Dorsolateral prefrontal cortex (tissue), 120 donors: ENCODE measurements at regions of chr11 and their contacts with region 1.

Region 1: DNA sequence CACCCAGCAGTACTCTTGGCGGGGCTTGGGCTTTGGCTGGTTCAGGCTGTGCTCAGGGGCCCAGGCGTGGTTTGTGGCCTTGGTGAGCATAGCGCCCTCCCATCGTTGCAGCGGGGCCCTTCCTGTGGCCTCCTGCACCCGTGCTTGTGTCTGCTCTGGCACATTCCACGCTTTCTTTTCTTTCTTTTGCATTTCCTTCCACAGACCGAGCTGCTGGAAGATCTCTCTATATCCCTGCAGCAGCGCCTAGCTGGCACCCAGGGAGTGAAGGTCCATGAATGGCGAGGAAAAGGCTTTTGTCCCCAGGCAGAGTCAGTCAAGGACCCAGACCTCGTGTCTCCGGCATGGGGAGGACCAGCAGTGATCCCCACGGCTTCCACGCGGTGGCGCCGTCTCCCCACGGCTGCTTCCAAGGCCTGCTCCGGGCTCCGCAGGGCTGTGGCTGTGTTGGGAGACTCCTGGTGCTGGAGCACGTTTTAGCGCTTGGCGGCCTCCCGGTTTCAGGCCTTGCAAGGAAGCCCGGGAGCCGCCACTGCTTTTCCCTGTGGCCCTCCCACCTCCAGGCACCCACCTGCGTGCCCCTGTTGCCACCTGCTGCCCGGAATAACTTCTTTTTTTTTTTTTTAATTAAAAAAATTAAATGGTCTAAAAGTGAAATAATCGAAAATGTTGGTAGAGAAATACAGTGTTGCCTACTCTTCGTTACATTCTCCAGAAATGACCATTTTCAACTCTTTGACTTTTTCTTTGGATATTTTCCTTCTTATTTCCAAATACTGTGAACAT is 28.5 kb downstream of the GLB1L2 start:
- DNase-seq: peak; percentile 68 to 94 (median 90)
- H3K4me3 ChIP-seq: peak overlapping the region in 1 of 59 donors; percentile 21
- H3K27ac ChIP-seq: no peak overlapping the region
- H3K27me3 ChIP-seq: peaks cover 0 to 6% (median 0%) of the 10 kb centered on the region in 45 donors
- CTCF ChIP-seq: peak; percentile 64 to 99 (median 94)

Region 2: DNA sequence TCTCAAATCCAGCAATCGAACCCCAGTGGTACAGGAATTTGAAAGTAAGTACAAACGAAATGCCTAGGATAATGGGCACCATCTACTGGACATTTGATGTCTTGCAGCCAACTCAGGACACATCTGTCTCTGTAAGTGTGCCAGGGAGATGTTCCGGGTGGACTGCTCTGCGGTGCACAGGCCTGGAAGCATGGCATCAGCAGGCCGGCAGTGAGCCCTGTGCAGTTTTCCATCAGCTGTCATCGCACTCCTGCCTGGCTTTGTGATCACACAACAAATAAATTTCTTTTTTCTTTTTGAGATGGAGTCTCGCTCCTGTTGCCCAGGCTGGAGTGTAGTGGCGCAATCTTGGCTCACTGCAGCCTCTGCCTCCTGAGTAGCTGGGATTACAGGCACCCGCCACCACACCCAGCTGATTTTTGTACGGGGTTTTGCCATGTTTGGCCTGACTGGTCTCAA is 220.3 kb before region 1 on chr11:
- intact Hi-C with region 1: no loop called
- DNase-seq: peak; percentile 47 to 90 (median 80)
- H3K4me3 ChIP-seq: peak overlapping the region in 7 of 59 donors; percentile 1 to 25 (median 21)
- H3K27ac ChIP-seq: peak overlapping the region in 56 of 59 donors; percentile 33 to 89 (median 79)
- H3K27me3 ChIP-seq: no peaks in the 10 kb centered on the region
- CTCF ChIP-seq: peak; percentile 70 to 97 (median 92)

Region 3: DNA sequence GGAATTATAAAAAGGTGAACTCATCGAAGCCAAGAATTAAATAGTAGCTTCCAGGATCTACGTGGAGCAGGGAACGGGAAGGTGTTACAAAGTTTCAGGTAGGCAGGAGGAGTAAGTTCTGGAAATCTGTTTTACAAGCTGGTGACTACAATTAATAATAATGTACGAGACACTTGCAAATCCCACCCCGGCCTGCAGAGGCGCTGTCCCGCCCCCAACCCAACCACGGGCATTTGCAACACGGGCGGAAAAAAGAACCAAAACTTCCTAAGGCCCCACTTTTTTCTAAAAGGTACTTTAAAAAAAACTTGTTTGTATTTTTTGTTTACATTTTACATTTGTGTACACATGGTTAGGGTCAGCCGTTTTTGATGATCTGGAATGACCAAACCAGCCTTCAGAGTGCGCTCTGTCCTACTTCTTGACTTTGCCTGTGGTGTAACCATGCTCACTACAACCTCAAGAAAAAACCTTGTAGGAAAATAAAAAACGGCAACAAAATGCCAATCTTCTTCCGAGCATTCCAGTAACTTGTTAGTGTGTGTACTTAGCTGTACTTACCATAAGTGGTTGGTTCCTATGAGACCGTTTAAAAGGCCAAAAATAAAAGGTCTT is 501.4 kb after region 1 on chr11:
- intact Hi-C with region 1: loop called (anchors 5 to 10 kb)
- DNase-seq: no peak
- H3K4me3 ChIP-seq: no peak overlapping the region
- H3K27ac ChIP-seq: no peak overlapping the region
- H3K27me3 ChIP-seq: peaks cover 0 to 5% (median 0%) of the 10 kb centered on the region in 45 donors
- CTCF ChIP-seq: peak in 1 of 56 donors; percentile 7

Region 4: GRCh38 chr11:134866981-134867675 is 506.9 kb after region 1 on chr11:
- intact Hi-C with region 1: loop called (anchors 5 to 10 kb)
- DNase-seq: no peak
- H3K4me3 ChIP-seq: no peak overlapping the region
- H3K27ac ChIP-seq: no peak overlapping the region
- H3K27me3 ChIP-seq: peaks cover 0 to 5% (median 0%) of the 10 kb centered on the region in 45 donors
- CTCF ChIP-seq: no peak